ENCODE measurements at regions of chr5 and their contacts with region 1.

Region 1: DNA sequence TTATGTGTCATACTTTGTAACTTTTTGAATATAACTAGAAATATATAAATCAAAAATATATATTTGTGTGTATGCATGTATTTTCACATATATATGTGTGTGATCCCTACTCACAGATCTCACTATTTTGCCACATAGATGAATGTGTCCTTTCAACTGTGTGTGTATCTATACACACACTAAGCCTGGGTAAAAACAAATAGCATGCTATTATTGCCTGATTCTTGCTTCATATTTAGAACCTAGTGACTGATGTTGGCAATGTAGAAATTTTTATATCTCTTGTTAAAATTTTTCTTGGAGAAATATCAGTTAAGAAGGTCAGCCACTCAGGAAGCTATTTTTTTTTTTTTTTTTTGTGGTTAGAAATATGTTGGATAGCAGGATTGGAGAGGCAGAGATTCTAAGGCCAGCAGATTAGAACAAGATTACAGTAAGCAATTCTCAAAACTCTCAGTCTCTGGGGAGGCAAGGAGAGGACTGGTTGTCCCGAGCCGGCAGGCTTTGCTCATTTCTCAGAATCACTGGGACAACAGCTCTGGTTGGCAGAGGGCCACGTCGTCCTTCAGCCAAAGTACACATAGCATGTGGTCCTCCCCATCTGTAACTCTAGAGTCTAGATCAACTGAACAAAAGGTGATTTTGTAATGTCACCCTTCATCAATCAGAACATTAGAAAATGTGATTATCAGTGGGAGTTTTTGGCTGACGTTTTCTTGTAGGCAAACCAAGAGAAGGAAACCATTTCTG is 19.7 kb downstream of the C6 start:
- DNase-seq: peak; percentile 96 to 98
- ATAC-seq: peak; percentile 96
- H3K4me3 ChIP-seq: no peak overlapping the region
- H3K27ac ChIP-seq: no peak overlapping the region
- H3K4me1 ChIP-seq: no peaks in the 10 kb centered on the region
- H3K27me3 ChIP-seq: no peaks in the 10 kb centered on the region

Region 2: GRCh38 chr5:40991168-40991980 is 202.3 kb before region 1 on chr5:
- intact Hi-C with region 1: loop called in 1 of 2 experiments (anchors 5 kb)
- DNase-seq: peak in 1 of 2 donors; percentile 78
- ATAC-seq: peak; percentile 95
- H3K4me3 ChIP-seq: no peak overlapping the region
- H3K27ac ChIP-seq: no peak overlapping the region
- H3K4me1 ChIP-seq: peaks cover 6 to 10% of the 10 kb centered on the region in 2 donors
- H3K27me3 ChIP-seq: no peaks in the 10 kb centered on the region

Region 3: GRCh38 chr5:41252036-41252435 is 58.4 kb after region 1 on chr5:
- intact Hi-C with region 1: loop called in 1 of 2 experiments (anchors 5 kb)
- DNase-seq: no peak
- ATAC-seq: no peak
- H3K4me3 ChIP-seq: no peak overlapping the region
- H3K27ac ChIP-seq: no peak overlapping the region
- H3K4me1 ChIP-seq: peaks cover 4 to 6% of the 10 kb centered on the region in 2 donors
- H3K27me3 ChIP-seq: no peaks in the 10 kb centered on the region

Measured in aorta (tissue), 5 donors.